ENCODE measurements at regions of chrX and their contacts with region 1.

Region 1: GRCh38 chrX:10119399-10119990 is 37.3 kb upstream of the CLCN4 start:
- DNase-seq: peak; percentile 55
- H3K4me3 Mint-ChIP-seq: no peak overlapping the region
- H3K27ac Mint-ChIP-seq: peak overlapping the region; percentile 61
- H3K4me1 Mint-ChIP-seq: no peaks in the 10 kb centered on the region
- H3K27me3 Mint-ChIP-seq: no peaks in the 10 kb centered on the region
- CTCF ChIP-seq: peak; percentile 99

Region 2: DNA sequence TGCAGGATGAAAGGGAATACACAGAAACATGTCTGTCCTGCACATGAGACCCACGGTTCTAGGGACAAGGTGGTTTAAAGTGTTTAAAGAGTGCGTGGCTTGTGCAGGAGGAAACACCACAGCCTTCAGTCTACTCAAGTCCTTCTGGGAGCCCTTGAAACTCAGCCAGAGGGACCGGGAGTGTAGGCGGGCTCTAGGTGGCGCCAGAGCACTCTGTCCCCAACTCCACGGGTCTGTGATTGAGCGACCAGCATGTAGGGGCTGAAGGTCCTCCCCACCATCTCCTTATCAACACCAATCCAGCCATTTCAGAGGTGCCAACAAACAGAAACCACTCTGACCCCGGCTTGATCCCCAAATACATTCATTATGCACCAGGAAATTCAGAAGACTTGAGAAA is 234.3 kb before region 1 on chrX:
- CTCF ChIA-PET with region 1: no interaction called
- intact Hi-C with region 1: loop called (anchors 1 kb)
- DNase-seq: peak; percentile 77
- H3K4me3 Mint-ChIP-seq: no peak overlapping the region
- H3K27ac Mint-ChIP-seq: no peak overlapping the region
- H3K4me1 Mint-ChIP-seq: peaks cover 26% of the 10 kb centered on the region
- H3K27me3 Mint-ChIP-seq: no peaks in the 10 kb centered on the region
- CTCF ChIP-seq: peak; percentile 69

Region 3: GRCh38 chrX:9995855-9996339 is 123.6 kb before region 1 on chrX:
- CTCF ChIA-PET with region 1: interaction called, 3 read pairs
- intact Hi-C with region 1: loop called (anchors 1 kb)
- DNase-seq: peak; percentile 82
- H3K4me3 Mint-ChIP-seq: no peak overlapping the region
- H3K27ac Mint-ChIP-seq: no peak overlapping the region
- H3K4me1 Mint-ChIP-seq: no peaks in the 10 kb centered on the region
- H3K27me3 Mint-ChIP-seq: no peaks in the 10 kb centered on the region
- CTCF ChIP-seq: peak; percentile 95

Region 4: DNA sequence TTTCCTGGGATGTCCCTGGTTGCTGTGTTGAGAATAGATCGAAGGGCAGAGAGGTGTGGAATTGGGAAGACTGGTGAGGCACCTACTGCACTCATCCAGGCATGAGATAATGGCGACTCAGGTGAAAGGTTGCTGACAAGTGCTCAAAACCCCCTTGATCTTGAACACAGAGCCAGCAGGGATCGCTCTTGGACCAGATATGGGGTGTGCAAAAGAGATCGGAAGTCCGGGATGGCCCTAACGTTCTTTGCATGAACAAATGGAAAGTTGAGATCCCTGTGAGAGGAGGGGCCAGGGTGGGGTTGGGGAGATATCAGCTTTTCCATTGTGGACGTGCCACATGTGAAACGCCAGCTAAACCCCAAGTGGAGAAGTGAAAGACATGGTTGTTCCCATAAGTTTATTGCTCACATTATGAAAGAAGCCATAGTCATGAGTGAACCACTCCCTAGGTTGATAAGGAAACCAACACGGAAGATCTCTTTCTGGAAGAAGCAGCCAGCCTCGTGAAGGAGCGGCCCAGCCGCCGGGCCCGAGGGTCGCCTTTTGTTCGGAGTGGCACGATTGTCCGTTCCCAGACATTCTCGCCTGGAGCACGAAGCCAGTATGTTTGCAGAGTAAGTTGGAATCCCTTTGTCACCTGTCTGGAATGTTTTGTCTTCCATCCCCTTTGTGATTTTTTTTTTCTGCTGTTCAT is 14.6 kb after region 1 on chrX:
- CTCF ChIA-PET with region 1: no interaction called
- intact Hi-C with region 1: no loop called
- DNase-seq: no peak
- H3K4me3 Mint-ChIP-seq: no peak overlapping the region
- H3K27ac Mint-ChIP-seq: no peak overlapping the region
- H3K4me1 Mint-ChIP-seq: peaks cover 10% of the 10 kb centered on the region
- H3K27me3 Mint-ChIP-seq: no peaks in the 10 kb centered on the region
- CTCF ChIP-seq: no peak

Region 5: GRCh38 chrX:10156199-10157031 is 36.9 kb after region 1 on chrX and contains the start of gene CLCN4:
- CTCF ChIA-PET with region 1: interaction called, 4 read pairs
- intact Hi-C with region 1: loop called (anchors 2 kb)
- DNase-seq: peak; percentile 84
- H3K4me3 Mint-ChIP-seq: peak within 1 kb of the TSS; percentile 75
- H3K27ac Mint-ChIP-seq: peak within 1 kb of the TSS; percentile 82
- H3K4me1 Mint-ChIP-seq: peaks cover 20% of the 10 kb centered on the region
- H3K27me3 Mint-ChIP-seq: no peaks in the 10 kb centered on the region
- CTCF ChIP-seq: no peak
- total RNA-seq, gene CLCN4: 9.9 and 13.3 TPM in 2 replicates

Measured in Calu3 (cell line).